ENCODE measurements at regions of chr5 and their contacts with region 1.

Region 1: DNA sequence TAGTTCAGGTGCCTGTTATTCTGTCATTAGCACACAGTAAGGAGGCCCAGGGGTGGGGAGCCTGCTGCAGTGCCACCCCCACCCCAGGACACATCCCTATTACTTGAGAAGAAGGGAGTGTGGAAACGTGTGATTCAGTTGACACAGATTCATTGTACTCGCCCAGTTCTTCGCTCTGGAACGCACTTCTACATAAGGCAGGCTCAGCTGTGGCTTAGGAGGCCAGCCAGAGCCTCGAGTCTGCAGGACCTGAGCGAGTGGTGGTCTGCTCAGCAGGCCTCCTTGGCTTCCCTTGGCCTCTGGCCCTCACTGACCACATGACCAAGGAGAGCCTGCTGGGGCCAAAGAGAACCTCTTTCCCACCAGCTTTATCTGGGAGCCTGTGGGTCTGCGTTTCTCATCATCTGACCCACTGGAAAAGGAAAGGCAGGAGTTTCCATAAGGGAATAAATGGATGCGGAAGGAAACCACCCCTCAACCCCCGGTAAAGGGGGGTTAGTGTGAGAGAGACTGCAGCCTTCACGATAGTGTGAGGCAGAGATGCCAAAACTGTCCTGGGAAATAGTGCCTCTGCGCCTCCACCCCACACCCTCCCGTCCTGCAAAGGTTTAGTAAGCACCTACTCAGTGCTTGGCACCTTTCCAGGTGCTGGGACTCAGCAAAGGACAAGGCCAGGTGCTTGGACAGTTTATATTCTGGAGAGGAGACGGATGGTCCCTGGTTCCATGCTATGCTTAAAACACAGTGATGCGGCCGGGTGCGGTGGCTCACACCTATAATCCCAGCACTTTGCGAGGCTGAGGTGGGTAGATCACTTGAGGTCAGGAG is 73.7 kb downstream of the PPARGC1B start:
- DNase-seq: no peak
- H3K4me3 ChIP-seq: no peak overlapping the region
- H3K4me3 Mint-ChIP-seq: no peak overlapping the region
- H3K27ac Mint-ChIP-seq: peak overlapping the region; percentile 60
- H3K4me1 ChIP-seq: peaks cover 5% of the 10 kb centered on the region; the same call in 1 of the 2 replicates
- H3K4me1 Mint-ChIP-seq: no peaks in the 10 kb centered on the region
- H3K27me3 ChIP-seq: no peaks in the 10 kb centered on the region
- H3K27me3 Mint-ChIP-seq: no peaks in the 10 kb centered on the region
- CTCF ChIP-seq: no peak

Region 2: DNA sequence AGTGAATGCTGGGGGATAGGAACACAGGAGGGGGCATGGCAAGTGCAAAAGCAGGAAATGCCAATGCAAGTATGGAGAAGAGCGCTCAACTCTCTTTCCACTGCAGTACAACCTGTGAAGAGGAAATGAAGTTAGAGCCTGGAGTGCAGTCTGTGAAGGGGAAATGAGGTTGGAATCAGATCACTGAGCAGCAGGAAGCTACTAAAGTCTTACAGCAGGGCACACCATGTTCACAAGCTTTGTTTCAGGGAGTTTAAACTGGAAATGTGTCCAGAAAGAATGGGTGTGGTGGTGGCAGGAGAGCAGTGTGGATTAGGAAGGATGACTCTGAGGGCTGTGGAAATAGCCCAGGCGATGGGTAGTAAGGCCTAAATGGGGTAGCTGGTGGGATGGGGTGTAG is 207.1 kb before region 1 on chr5:
- CTCF ChIA-PET with region 1: no interaction called
- POLR2A ChIA-PET with region 1: no interaction called
- intact Hi-C with region 1: no loop called
- DNase-seq: no peak
- H3K4me3 ChIP-seq: no peak overlapping the region
- H3K4me3 Mint-ChIP-seq: no peak overlapping the region
- H3K27ac Mint-ChIP-seq: peak overlapping the region; percentile 5
- H3K4me1 ChIP-seq: no peaks in the 10 kb centered on the region
- H3K4me1 Mint-ChIP-seq: peaks cover 14% of the 10 kb centered on the region
- H3K27me3 ChIP-seq: no peaks in the 10 kb centered on the region
- H3K27me3 Mint-ChIP-seq: no peaks in the 10 kb centered on the region
- CTCF ChIP-seq: no peak

Region 3: GRCh38 chr5:150340614-150341255 is 536.9 kb after region 1 on chr5:
- CTCF ChIA-PET with region 1: no interaction called
- POLR2A ChIA-PET with region 1: no interaction called
- intact Hi-C with region 1: loop called (anchors 5 kb)
- DNase-seq: no peak
- H3K4me3 ChIP-seq: no peak overlapping the region
- H3K4me3 Mint-ChIP-seq: no peak overlapping the region
- H3K27ac Mint-ChIP-seq: no peak overlapping the region
- H3K4me1 ChIP-seq: no peaks in the 10 kb centered on the region
- H3K4me1 Mint-ChIP-seq: no peaks in the 10 kb centered on the region
- H3K27me3 ChIP-seq: no peaks in the 10 kb centered on the region
- H3K27me3 Mint-ChIP-seq: no peaks in the 10 kb centered on the region
- CTCF ChIP-seq: no peak

Measured in Caco-2 (cell line).